Activated CD4-positive, alpha-beta memory T cell treated with anti-CD3 and anti-CD28 coated beads, Interleukin-2, amount 10 ng/mL, durations not matched to agents 7 days and 5 days (primary cell): ENCODE measurements at regions of chr2 and their contacts with region 1.

Region 1: DNA sequence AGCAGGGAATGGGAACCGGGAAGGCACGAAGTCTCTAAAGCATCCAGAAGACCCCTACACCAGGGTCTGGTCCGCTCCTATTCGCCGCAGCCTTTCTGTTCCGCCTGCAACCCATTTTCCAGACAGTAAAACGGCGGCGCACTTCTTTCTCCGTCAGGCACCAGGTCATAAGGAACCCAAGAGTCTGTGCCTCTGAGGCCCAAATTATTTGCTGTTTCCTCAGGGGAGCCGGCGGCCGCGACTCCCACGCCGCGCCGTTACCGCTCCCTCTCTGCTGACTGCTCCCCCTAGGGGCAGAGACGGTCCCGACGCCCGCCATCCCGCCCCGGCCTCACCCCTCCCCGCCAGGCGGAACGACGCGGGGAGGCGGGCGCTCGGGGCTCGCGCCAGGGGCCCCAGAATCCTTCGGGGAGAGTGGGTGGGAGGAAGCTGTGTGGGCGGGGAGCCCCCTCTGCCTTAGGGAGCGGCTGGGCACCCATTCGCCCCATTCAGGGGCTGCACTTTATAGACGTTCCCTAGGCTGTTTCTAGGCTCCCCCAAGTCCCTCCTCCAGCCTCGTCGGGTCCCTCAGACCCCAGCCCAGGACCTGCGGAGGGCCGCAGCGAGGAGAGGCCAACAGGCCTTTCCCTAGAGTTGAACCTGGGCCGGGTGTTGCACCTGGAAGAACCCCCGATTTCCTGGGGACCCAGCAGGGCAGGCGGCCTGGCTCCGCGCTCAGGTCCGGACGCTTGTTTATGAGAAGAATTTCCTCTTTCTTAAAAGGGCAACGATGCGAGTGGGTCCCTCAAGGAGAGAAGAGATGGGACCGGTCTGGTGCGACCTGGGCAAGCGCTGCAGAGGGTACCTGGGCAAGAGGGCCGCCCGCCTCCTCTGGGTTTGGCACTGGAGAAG is 3.6 kb upstream of the CTDSP1 start:
- DNase-seq: peak; percentile 96
- H3K4me3 Mint-ChIP-seq: peak overlapping the region; percentile 83
- H3K27ac Mint-ChIP-seq: peak overlapping the region; percentile 93
- H3K4me1 Mint-ChIP-seq: peaks cover 34% of the 10 kb centered on the region
- H3K27me3 Mint-ChIP-seq: no peaks in the 10 kb centered on the region

Region 2: GRCh38 chr2:218216674-218217359 is 179.2 kb before region 1 on chr2 and contains the start of gene ARPC2:
- CTCF ChIA-PET with region 1: interaction called, 6 read pairs
- POLR2A ChIA-PET with region 1: interaction called, 10 read pairs
- DNase-seq: peak; percentile 96
- H3K4me3 Mint-ChIP-seq: peak within 1 kb of the TSS; percentile 93
- H3K27ac Mint-ChIP-seq: peak within 1 kb of the TSS; percentile 92
- H3K4me1 Mint-ChIP-seq: peaks cover 41% of the 10 kb centered on the region
- H3K27me3 Mint-ChIP-seq: no peaks in the 10 kb centered on the region
- total RNA-seq, gene ARPC2: 765 to 778 TPM

Region 3: GRCh38 chr2:218275371-218276072 is 120.5 kb before region 1 on chr2:
- CTCF ChIA-PET with region 1: interaction called, 20 read pairs
- POLR2A ChIA-PET with region 1: interaction called, 19 read pairs
- DNase-seq: no peak
- H3K4me3 Mint-ChIP-seq: no peak overlapping the region
- H3K27ac Mint-ChIP-seq: no peak overlapping the region
- H3K4me1 Mint-ChIP-seq: peaks cover 31% of the 10 kb centered on the region
- H3K27me3 Mint-ChIP-seq: no peaks in the 10 kb centered on the region

Region 4: GRCh38 chr2:218292048-218293014 is 103.7 kb before region 1 on chr2 and contains the start of gene TMBIM1:
- CTCF ChIA-PET with region 1: interaction called, 32 read pairs
- POLR2A ChIA-PET with region 1: interaction called, 71 read pairs
- DNase-seq: peak; percentile 84
- H3K4me3 Mint-ChIP-seq: peak within 1 kb of the TSS; percentile 82
- H3K27ac Mint-ChIP-seq: peak within 1 kb of the TSS; percentile 95
- H3K4me1 Mint-ChIP-seq: peaks cover 69% of the 10 kb centered on the region
- H3K27me3 Mint-ChIP-seq: no peaks in the 10 kb centered on the region
- total RNA-seq, gene TMBIM1: 105 to 107 TPM

Region 5: GRCh38 chr2:218357236-218358159 is 38.5 kb before region 1 on chr2:
- CTCF ChIA-PET with region 1: interaction called, 16 read pairs
- POLR2A ChIA-PET with region 1: interaction called, 3 read pairs
- DNase-seq: no peak
- H3K4me3 Mint-ChIP-seq: no peak overlapping the region
- H3K27ac Mint-ChIP-seq: no peak overlapping the region
- H3K4me1 Mint-ChIP-seq: no peaks in the 10 kb centered on the region
- H3K27me3 Mint-ChIP-seq: peaks cover 5% of the 10 kb centered on the region

Region 6: DNA sequence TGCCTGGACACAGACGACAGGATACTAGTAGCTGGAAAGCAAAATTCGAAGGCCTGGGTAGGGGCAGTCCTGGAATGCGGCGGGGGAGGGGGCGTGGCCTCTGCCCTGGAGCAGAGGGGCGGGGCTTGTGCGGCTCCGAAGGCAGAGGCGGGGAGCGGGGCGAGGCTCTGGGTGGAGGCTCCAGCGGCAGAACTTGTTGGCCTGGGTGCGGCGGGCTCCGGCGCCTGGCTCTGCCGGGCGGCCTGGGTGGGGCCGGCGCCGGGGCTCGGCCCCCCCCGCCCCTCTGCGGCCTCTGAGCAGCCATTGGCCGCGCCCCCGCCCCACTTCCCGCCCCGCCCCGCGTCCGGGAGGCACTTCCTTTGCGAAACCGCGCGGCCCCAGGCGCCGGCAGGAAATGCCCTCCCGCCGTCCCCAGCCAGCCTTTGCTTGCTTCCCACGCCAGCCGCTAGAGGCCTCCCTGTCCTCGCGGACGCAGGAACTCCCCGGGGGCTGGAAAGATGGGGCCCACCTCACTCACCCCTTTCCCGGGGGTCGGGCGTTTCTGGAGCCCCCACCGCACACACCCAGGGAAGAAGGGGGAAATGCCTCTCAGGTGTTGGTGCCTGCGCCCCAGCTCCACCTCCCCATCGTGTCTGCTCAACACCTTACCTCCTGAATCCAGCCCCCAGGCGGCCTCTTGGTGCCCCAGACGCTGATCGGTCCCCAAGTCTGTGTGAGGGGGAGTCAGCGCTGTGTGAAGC is 10.3 kb after region 1 on chr2:
- CTCF ChIA-PET with region 1: interaction called, 21 read pairs
- POLR2A ChIA-PET with region 1: interaction called, 71 read pairs
- DNase-seq: peak; percentile 97
- H3K4me3 Mint-ChIP-seq: peak overlapping the region; percentile 68
- H3K27ac Mint-ChIP-seq: peak overlapping the region; percentile 86
- H3K4me1 Mint-ChIP-seq: peaks cover 64% of the 10 kb centered on the region
- H3K27me3 Mint-ChIP-seq: no peaks in the 10 kb centered on the region

Region 7: GRCh38 chr2:218452079-218452478 is 56.0 kb after region 1 on chr2:
- CTCF ChIA-PET with region 1: no interaction called
- POLR2A ChIA-PET with region 1: no interaction called
- DNase-seq: no peak
- H3K4me3 Mint-ChIP-seq: no peak overlapping the region
- H3K27ac Mint-ChIP-seq: no peak overlapping the region
- H3K4me1 Mint-ChIP-seq: peaks cover 9% of the 10 kb centered on the region
- H3K27me3 Mint-ChIP-seq: no peaks in the 10 kb centered on the region